Panc1 (cell line): ENCODE measurements at regions of chr2 and their contacts with region 1.

Region 1: GRCh38 chr2:127796389-127796788 is 14.6 kb downstream of the WDR33 start:
- DNase-seq: no peak
- ATAC-seq: 0 out of 2 replicates have a peak, but pooled peaks have one; percentile 17
- H3K4me3 ChIP-seq: no peak overlapping the region
- H3K27ac ChIP-seq: no peak overlapping the region
- H3K4me1 ChIP-seq: no peaks in the 10 kb centered on the region
- H3K27me3 ChIP-seq: no peaks in the 10 kb centered on the region
- CTCF ChIP-seq: no peak

Region 2: GRCh38 chr2:127753374-127753773 is 43.0 kb before region 1 on chr2:
- CTCF ChIA-PET with region 1: no interaction called
- POLR2A ChIA-PET with region 1: interaction called, 12 read pairs
- in situ Hi-C with region 1: no loop called
- intact Hi-C with region 1: no loop called
- DNase-seq: no peak
- ATAC-seq: no peak
- H3K4me3 ChIP-seq: no peak overlapping the region
- H3K27ac ChIP-seq: no peak overlapping the region
- H3K4me1 ChIP-seq: no peaks in the 10 kb centered on the region
- H3K27me3 ChIP-seq: no peaks in the 10 kb centered on the region
- CTCF ChIP-seq: no peak

Region 3: DNA sequence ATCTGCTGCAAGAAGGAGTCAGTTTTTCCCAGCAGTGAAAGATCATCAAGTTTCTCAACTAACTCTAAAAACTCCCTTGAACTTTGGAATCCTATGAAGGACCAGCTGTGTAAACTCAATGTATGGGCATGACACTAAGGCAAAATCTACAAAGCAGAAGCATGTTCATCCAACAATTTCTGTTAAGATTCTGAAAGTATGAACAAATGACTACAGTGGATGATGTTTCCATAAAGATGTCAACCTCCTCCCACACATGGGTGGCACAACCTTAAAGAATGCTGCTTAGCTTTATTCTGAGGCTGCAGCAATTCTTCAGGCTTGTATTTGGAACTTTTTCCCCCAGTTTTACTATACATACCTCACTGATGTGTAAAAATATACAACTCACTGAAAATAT is 32.6 kb before region 1 on chr2:
- CTCF ChIA-PET with region 1: interaction called, 11 read pairs
- POLR2A ChIA-PET with region 1: no interaction called
- in situ Hi-C with region 1: no loop called
- intact Hi-C with region 1: no loop called
- DNase-seq: no peak
- ATAC-seq: no peak
- H3K4me3 ChIP-seq: no peak overlapping the region
- H3K27ac ChIP-seq: no peak overlapping the region
- H3K4me1 ChIP-seq: no peaks in the 10 kb centered on the region
- H3K27me3 ChIP-seq: no peaks in the 10 kb centered on the region
- CTCF ChIP-seq: no peak

Region 4: DNA sequence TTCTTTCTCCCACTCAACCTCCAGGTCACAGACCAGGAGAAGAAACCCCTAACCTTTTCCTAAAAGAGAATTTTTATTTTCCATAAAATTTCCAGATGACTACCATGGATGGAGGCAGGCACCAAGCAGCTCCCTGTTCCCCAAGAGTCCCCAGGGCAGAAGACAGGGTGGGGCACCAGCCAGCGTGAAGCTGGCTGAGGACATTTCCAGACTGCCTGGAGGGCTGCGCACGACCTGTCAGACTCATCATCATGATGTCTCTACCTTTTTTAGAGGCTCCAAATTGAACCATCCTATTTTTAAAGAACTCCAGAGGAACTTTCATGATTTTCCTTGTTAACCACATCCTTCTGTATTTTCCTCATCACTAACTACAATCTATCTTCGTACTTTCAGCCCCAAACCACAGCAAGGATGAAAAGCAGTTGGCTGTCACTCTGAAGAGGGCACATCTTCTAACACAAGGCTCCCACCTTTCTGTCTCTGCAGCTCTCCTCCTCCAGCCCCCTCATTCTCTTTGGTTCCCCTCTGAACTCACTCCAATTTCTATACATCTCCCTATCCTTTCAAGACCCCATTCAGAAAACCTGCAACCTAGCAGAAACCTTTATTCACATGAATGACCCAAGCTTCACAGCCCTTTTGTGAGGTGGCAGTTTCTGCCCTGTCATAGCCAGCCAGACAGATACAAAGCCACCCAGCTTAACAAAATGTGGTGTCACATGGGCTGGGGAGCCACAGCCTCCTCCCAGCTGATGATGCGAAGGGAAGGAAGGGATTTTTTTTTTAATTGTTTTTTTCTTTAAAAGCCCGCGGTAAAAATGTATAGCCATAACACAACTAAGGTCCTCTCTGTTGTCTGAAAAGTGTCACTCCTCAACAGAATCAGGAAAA is 78.2 kb after region 1 on chr2:
- CTCF ChIA-PET with region 1: interaction called, 12 read pairs
- POLR2A ChIA-PET with region 1: no interaction called
- in situ Hi-C with region 1: no loop called
- intact Hi-C with region 1: no loop called
- DNase-seq: no peak
- ATAC-seq: no peak
- H3K4me3 ChIP-seq: no peak overlapping the region
- H3K27ac ChIP-seq: no peak overlapping the region
- H3K4me1 ChIP-seq: no peaks in the 10 kb centered on the region
- H3K27me3 ChIP-seq: no peaks in the 10 kb centered on the region
- CTCF ChIP-seq: no peak